ENCODE measurements at regions of chr5 and their contacts with region 1.

Region 1: DNA sequence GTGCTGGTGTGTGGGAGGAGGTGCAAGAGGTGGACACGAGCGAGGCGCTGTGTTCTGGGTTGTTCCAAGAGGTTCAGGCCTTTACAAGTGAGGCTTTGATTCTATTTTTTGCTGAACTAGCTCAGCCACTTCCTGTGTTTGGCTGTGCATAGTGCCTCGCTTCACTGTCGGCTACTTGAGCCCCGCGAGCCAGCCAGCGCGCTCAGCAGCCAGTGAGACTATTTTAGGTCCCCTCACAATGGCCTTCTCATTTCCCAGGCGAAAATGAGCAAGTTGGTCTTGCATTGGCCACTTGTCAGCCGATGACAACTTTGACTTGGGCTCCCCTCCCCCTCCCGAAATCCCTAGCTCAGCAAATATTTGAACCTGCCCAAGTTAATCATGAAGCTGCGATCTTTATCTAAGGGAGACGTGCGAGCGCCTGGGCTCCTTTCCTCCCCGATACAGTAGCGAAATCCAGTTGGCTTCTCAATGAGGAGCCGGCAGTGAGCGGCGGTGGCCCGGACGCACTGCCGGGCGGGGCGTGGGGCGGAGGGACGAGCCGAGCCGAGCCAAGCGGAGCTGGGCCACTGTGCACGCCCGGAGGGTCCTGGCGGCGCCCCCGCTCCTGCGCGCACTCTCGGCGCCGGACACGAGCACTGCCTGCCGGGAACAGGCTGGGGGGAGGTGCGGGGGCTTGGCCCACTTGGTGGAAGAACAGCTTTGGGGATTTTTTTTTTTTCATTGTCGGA is 72.6 kb downstream of the PIK3R1 start:
- DNase-seq: peak; percentile 61 to 88 (median 82)
- H3K4me3 ChIP-seq: peak overlapping the region; percentile 42 to 80 (median 65)
- H3K27ac ChIP-seq: peak overlapping the region; percentile 85 to 98 (median 95)
- H3K27me3 ChIP-seq: no peaks in the 10 kb centered on the region
- CTCF ChIP-seq: peak in 26 of 56 donors; percentile 4 to 52 (median 22)

Region 2: DNA sequence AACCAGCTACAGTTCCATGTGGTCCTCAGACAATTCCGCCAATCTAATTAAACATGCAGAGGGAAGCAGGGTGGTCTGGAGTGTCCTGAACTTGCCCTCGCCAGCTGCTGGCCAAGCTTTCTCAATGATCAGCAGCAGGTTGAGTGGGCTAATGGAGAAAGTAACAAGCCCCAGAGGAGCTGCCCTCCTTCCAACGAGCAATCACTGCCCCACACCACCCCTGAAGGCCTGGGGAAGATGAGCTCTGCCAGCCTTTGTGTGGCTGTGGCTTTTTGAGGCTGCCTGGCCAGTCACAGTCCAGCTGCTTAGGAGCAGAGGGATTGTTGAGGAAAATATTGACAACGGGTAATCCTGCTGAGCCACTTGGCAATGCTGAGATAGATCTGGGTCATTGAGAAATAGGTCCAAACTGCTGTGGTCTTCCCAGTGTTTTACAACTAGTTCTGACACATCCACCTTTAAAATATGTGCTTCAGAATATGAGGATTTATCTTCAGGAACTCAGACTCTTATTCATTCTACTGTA is 1198.9 kb before region 1 on chr5:
- intact Hi-C with region 1: no loop called
- DNase-seq: no peak
- H3K4me3 ChIP-seq: no peak overlapping the region
- H3K27ac ChIP-seq: peak overlapping the region in 16 of 59 donors; percentile 5 to 59 (median 26)
- H3K27me3 ChIP-seq: no peaks in the 10 kb centered on the region
- CTCF ChIP-seq: no peak

Region 3: GRCh38 chr5:68378204-68378824 is 90.2 kb after region 1 on chr5:
- intact Hi-C with region 1: no loop called
- DNase-seq: no peak
- H3K4me3 ChIP-seq: no peak overlapping the region
- H3K27ac ChIP-seq: no peak overlapping the region
- H3K27me3 ChIP-seq: no peaks in the 10 kb centered on the region
- CTCF ChIP-seq: no peak

Region 4: DNA sequence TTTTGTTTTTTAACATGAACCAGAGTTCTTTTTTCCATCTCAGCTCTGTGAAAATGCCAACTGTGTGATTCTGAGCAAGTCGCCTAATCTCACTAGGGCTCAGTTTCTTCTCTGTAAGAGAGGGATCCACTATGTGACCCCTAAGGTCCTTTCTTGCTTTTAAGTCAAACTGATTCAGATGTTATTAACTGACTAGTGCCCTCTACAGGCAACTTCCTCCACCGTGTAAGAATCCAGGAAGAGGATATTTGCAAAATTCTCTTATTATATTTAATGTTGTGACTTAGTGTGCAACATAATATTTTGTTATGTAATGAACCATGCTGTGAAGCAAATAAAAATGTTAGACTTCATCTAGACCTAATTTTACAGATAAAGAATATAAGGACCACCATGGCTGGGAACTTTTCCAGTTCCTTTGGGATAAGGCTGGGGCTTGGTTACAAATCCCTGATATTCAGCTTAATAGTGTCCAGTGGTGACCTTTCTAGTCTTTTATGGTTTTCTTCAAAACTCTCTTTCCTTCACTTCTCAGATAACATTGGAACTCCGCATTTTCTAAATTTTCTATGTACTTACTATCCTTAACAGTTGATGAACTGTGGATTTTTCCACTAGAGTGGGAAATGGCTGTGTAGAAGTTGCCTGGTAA is 172.1 kb after region 1 on chr5:
- intact Hi-C with region 1: loop called (anchors 5 kb)
- DNase-seq: no peak
- H3K4me3 ChIP-seq: no peak overlapping the region
- H3K27ac ChIP-seq: peak overlapping the region in 12 of 59 donors; percentile 1 to 38 (median 14)
- H3K27me3 ChIP-seq: no peaks in the 10 kb centered on the region
- CTCF ChIP-seq: peak; percentile 51 to 85 (median 74)

Region 5: GRCh38 chr5:68730359-68731300 is 442.5 kb after region 1 on chr5:
- intact Hi-C with region 1: loop called (anchors 5 to 10 kb)
- DNase-seq: peak in 9 of 10 donors; percentile 48 to 85 (median 69)
- H3K4me3 ChIP-seq: peak overlapping the region in 31 of 59 donors; percentile 1 to 51 (median 18)
- H3K27ac ChIP-seq: peak overlapping the region; percentile 25 to 98 (median 89)
- H3K27me3 ChIP-seq: no peaks in the 10 kb centered on the region
- CTCF ChIP-seq: peak in 8 of 56 donors; percentile 6 to 24 (median 18)

Region 6: GRCh38 chr5:68745448-68745847 is 457.3 kb after region 1 on chr5:
- intact Hi-C with region 1: loop called in 1 of 2 experiments (anchors 5 kb)
- DNase-seq: peak in 4 of 10 donors; percentile 38 to 61 (median 46)
- H3K4me3 ChIP-seq: no peak overlapping the region
- H3K27ac ChIP-seq: peak overlapping the region in 48 of 59 donors; percentile 20 to 89 (median 70)
- H3K27me3 ChIP-seq: no peaks in the 10 kb centered on the region
- CTCF ChIP-seq: peak; percentile 31 to 74 (median 59)

Region 7: DNA sequence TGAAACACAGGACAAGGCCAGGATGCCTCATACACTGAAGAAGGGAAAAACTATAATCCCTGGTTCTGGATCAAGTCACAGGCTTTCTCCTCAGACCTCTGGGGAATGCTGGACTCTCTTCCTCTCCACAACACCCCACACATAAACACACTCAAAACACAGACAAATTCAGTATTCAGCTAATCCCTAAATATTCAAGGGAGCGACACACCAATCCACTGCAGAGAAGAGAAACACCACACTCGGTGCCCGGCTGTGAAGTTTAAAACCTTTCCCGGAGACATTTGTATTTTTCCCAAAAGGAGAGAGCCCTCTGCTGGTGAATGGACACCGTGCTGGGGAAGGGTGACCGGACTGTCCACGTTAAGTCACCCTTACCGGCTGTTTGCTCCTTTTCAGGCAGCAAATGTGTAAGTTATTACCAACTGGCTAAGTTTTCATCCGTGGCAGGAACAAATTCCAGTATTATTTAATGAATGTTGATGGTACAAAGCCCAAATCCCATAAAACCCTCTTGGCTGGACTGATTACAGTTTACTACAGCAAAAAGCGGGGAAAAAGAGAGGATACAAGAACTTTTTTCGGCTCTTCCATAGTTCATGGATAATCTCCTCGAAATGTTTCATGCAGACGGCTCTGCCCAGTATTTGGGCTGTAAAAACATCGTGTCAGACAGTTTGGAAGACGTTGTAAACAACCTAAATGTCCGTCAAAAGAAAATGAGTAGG is 674.8 kb after region 1 on chr5:
- intact Hi-C with region 1: loop called (anchors 2 to 5 kb)
- DNase-seq: peak; percentile 28 to 76 (median 65)
- H3K4me3 ChIP-seq: peak overlapping the region in 10 of 59 donors; percentile 0 to 38 (median 24)
- H3K27ac ChIP-seq: peak overlapping the region in 47 of 59 donors; percentile 3 to 78 (median 53)
- H3K27me3 ChIP-seq: no peaks in the 10 kb centered on the region
- CTCF ChIP-seq: peak; percentile 66 to 98 (median 89)

Region 8: GRCh38 chr5:69007726-69008368 is 719.7 kb after region 1 on chr5:
- intact Hi-C with region 1: loop called in 1 of 2 experiments (anchors 5 kb)
- DNase-seq: peak; percentile 52 to 90 (median 76)
- H3K4me3 ChIP-seq: peak overlapping the region in 2 of 59 donors; percentile 2 to 20
- H3K27ac ChIP-seq: peak overlapping the region in 56 of 59 donors; percentile 12 to 94 (median 76)
- H3K27me3 ChIP-seq: no peaks in the 10 kb centered on the region
- CTCF ChIP-seq: peak; percentile 58 to 88 (median 77)